Left cardiac atrium (tissue), 4 donors: ENCODE measurements at regions of chr3 and their contacts with region 1.

Region 1: DNA sequence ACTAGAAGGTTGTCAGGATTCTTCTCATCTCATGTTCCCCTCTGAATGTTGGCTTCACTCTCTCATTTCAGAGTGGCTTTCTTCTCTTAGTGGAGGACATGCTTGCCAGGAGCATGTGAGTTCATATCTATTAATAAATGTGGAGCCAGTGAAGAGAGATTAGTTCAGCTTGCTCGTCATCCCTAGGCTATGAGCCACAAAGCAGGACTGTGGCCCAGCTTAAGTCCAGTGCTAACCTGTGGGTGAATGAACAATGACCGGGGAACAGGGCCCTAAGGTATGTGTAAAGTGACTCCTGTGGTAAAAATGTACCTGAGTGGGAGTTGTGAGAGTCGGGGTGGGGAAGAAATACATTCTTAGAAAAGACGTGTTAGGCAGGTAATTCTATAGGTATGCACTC is 96.9 kb upstream of the TBL1XR1 start:
- DNase-seq: peak; percentile 71
- ATAC-seq: peak; percentile 94 to 95

Region 2: GRCh38 chr3:177096615-177097014 is 197.6 kb before region 1 on chr3:
- intact Hi-C with region 1: no loop called
- DNase-seq: no peak
- ATAC-seq: no peak

Region 3: DNA sequence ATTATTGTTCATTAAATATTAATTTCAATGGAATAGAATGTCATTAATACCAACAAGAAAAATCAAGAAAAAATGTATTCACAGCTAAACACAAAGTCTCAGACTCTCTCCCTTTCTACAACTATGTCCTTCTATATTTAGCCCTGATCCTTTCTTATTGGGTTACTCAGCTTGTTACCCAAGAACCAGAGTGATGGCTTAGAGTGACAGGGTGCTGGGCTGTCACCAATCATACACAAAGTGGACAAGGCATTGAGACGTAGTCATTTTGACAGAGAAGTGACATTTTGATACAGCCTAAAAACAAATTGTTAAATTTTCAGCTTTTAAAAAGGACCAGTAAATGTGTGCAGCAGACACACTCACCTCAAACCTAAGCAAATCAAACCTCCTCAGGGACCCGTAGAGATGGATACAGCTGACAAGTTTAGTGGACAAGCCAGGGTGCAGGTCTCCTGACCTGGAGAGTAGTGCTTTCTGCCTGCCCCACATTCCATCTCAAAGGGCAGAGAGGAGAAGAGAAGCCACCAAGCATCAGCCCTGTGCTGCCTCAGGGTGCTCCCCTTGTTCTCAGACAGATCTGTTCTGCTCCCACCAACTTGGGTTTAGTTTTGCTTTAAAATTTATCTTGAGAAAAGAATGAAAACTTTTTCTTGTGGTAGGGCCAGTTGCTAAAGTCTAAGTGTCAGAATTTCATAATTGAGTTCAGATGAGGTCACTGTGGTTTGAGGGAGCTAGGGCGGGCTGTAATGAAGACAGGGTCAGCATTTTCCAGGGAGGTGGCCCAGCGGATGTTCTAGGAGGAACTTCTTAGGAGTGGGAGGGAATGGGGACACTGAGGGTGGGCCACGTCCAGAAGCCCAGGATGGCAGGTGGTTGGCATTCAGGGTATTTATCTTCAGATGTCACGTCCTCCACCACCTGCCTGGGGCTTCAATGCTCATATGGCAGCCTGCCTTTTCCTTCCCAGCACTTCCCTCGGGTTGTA is 39.6 kb after region 1 on chr3:
- intact Hi-C with region 1: loop called in 1 of 2 experiments (anchors 5 kb)
- DNase-seq: peak; percentile 47
- ATAC-seq: peak; percentile 47 to 62

Region 4: DNA sequence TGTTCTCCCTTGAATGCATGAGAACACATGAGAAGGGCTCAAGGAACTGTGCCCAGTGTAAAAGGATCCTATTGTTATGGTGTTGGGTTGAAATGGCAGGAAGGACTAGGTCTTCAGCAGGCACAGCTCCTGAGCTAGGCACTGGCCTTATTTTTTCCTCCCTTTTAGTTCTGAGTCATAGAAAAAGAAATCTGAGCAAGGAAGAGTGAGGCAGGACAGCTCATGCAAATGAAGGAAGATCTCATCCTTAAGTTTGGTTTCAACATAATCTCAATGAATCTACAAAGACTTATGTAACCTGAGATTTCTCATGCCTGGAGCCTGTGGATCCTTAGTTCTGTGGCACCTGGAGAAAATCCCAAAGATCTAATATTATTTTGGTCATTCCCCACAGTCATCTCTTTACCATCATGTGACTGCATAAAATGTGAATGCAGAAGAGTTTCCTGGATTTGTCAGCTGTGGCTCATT is 91.6 kb after region 1 on chr3:
- intact Hi-C with region 1: no loop called
- DNase-seq: no peak
- ATAC-seq: peak in 1 of 2 donors; percentile 35

Region 5: DNA sequence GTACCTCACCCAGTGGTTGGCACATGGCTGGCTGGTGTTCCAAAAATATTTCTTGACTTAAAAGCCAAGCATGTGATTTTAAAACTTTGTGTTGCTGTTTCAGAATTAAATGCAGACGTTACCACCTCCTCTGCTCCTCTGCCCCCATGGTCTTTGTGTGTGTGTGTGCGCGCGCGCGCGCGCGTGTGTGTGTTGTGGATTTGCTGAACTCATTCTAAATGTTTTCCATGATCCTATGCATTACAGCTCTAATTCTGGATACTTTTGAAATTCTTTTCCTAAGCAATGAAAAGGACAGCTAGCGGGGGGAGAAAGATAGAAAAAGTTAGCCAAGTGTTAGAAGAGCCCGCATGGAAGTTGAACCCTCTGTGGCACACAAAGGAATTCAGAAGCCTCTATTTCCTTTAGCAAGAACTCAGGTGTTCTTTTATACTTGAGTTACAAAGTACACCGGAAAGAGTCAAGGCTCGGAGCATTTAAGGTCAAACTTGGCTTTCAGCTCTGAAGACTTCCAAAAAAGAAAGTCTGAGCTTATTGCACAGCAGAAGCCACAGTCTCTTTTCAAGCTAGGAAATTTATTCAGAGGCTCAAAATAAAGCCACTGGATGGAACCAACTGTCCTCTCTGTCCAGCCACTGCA is 253.6 kb after region 1 on chr3:
- intact Hi-C with region 1: no loop called
- DNase-seq: no peak
- ATAC-seq: no peak